ENCODE measurements at regions of chr16 and their contacts with region 1.

Region 1: GRCh38 chr16:49592546-49593423 is 219.2 kb downstream of the C16orf78 start:
- DNase-seq: peak in 1 of 5 donors; percentile 18
- H3K4me3 ChIP-seq: no peak overlapping the region
- H3K27ac ChIP-seq: no peak overlapping the region
- H3K4me1 ChIP-seq: peaks cover 8% of the 10 kb centered on the region
- H3K27me3 ChIP-seq: no peaks in the 10 kb centered on the region
- CTCF ChIP-seq: peak; percentile 27 to 47 (median 39)
- EP300 ChIP-seq: no peak
- POLR2A ChIP-seq: no peak

Region 2: GRCh38 chr16:49194537-49195236 is 398.1 kb before region 1 on chr16:
- intact Hi-C with region 1: no loop called
- DNase-seq: peak in 3 of 5 donors; percentile 11 to 68 (median 28)
- H3K4me3 ChIP-seq: no peak overlapping the region
- H3K27ac ChIP-seq: no peak overlapping the region
- H3K4me1 ChIP-seq: no peaks in the 10 kb centered on the region
- H3K27me3 ChIP-seq: no peaks in the 10 kb centered on the region
- CTCF ChIP-seq: no peak
- EP300 ChIP-seq: no peak
- POLR2A ChIP-seq: no peak

Region 3: GRCh38 chr16:49498666-49499413 is 93.9 kb before region 1 on chr16:
- intact Hi-C with region 1: loop called in 1 of 4 experiments (anchors 5 kb)
- DNase-seq: no peak
- H3K4me3 ChIP-seq: no peak overlapping the region
- H3K27ac ChIP-seq: no peak overlapping the region
- H3K4me1 ChIP-seq: no peaks in the 10 kb centered on the region
- H3K27me3 ChIP-seq: no peaks in the 10 kb centered on the region
- CTCF ChIP-seq: no peak
- EP300 ChIP-seq: no peak
- POLR2A ChIP-seq: no peak

Region 4: DNA sequence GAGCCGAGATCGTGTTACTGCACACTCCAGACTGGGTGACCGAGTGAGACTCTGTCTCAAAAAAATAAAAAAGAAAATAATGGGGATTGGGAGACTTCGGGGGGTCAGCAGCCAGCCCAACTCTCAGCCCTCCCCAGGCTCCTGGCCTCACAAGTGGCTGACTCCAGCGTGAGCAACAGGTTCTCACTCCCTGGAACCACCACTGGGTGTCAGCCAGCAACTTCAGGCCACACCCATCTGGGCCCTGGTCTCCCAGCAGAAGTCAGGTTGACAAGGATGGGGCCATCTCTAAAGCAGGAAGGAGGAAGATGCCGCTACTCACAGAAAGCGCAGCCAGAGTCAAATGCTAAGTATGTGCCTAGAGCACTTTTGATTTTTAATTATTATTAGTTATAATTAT is 79.7 kb before region 1 on chr16:
- intact Hi-C with region 1: loop called in 1 of 4 experiments (anchors 5 kb)
- DNase-seq: no peak
- H3K4me3 ChIP-seq: no peak overlapping the region
- H3K27ac ChIP-seq: no peak overlapping the region
- H3K4me1 ChIP-seq: no peaks in the 10 kb centered on the region
- H3K27me3 ChIP-seq: no peaks in the 10 kb centered on the region
- CTCF ChIP-seq: no peak
- EP300 ChIP-seq: no peak
- POLR2A ChIP-seq: no peak